Right ventricle myocardium inferior (tissue), 1 donor: ENCODE measurements at regions of chr11 and their contacts with region 1.

Region 1: GRCh38 chr11:32323814-32324130 is 111.6 kb downstream of the WT1 start:
- DNase-seq: no peak
- ATAC-seq: no peak

Region 2: GRCh38 chr11:32792948-32793475 is 469.2 kb after region 1 on chr11:
- intact Hi-C with region 1: loop called (anchors 2 kb)
- DNase-seq: no peak
- ATAC-seq: no peak